Endothelial cell of umbilical vein (primary cell): ENCODE measurements at regions of chr4 and their contacts with region 1.

Region 1: GRCh38 chr4:29966386-29966785 is 753.8 kb upstream of the PCDH7 start:
- DNase-seq: no peak
- H3K4me3 ChIP-seq: no peak overlapping the region
- H3K27ac ChIP-seq: no peak overlapping the region
- H3K4me1 ChIP-seq: no peaks in the 10 kb centered on the region
- H3K27me3 ChIP-seq: no peaks in the 10 kb centered on the region
- CTCF ChIP-seq: no peak
- POLR2A ChIP-seq: no peak

Region 2: GRCh38 chr4:30208741-30209435 is 242.5 kb after region 1 on chr4:
- CTCF ChIA-PET with region 1: no interaction called
- POLR2A ChIA-PET with region 1: no interaction called
- dilution Hi-C with region 1: no loop called
- intact Hi-C with region 1: loop called (anchors 5 kb)
- DNase-seq: no peak
- H3K4me3 ChIP-seq: no peak overlapping the region
- H3K27ac ChIP-seq: no peak overlapping the region
- H3K4me1 ChIP-seq: no peaks in the 10 kb centered on the region
- H3K27me3 ChIP-seq: no peaks in the 10 kb centered on the region
- CTCF ChIP-seq: no peak
- POLR2A ChIP-seq: no peak